HCT116 (cell line): ENCODE measurements at regions of chr11 and their contacts with region 1.

Region 1: GRCh38 chr11:69642913-69643632 is 2.1 kb downstream of the CCND1 start:
- DNase-seq: no peak
- ATAC-seq: peak; percentile 2; the same call in 1 of the 2 replicates
- H3K4me3 ChIP-seq: peak overlapping the region; percentile 96 to 99
- H3K27ac ChIP-seq: peak overlapping the region; percentile 96
- H3K4me1 ChIP-seq: peaks cover 10 to 63% of the 10 kb centered on the region in 2 experiments
- H3K27me3 ChIP-seq: no peaks in the 10 kb centered on the region
- CTCF ChIP-seq: peak in 2 of 3 experiments; percentile 76; a peak in 4 of 6 replicates
- POLR2A ChIP-seq: no peak
- RAD21 ChIP-seq: no peak

Region 2: DNA sequence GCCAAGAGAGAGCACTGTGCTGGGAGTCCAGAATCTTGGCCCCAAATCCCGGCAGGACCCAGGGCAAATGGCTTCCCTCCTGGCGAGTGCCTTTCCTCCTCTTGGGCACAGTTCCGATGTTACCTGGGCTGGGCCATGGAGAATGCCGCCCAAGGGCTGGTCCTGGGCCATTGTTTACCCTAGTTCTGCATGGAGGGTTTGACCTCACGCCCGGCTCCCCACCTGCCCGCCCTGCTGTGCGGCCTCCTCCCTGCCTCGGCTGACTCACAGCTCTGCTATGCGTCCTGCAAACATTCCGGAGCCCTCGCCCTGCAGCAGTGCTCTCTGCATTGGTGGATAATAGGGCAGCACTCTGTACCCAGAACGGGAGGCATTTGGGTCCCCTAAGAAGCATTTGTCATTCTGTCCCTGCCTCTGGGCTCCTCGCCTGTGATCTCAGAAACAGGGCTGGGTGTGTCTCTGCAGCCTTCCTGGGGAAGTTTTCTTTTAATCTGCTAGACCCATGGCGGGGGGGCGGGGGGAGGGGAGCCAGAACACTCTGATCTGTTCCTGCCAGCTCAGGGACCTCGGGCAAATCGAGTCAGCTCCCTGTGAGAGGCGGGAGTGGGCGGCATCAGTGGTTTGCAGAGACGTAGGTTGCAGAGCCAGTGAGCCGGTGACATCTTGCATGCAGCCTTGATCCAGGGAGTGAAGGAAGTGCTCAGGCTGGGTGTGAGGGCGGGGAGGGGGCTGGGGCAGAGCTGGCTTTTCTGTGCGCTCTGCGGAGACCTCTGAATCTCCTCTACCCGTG is 520.2 kb before region 1 on chr11:
- CTCF ChIA-PET with region 1: interaction called, 3 read pairs
- POLR2A ChIA-PET with region 1: no interaction called
- RAD21 ChIA-PET with region 1: no interaction called
- intact Hi-C with region 1: loop called (anchors 2 kb)
- DNase-seq: peak; percentile 92
- ATAC-seq: peak; percentile 88
- H3K4me3 ChIP-seq: peak overlapping the region; percentile 29 to 54
- H3K27ac ChIP-seq: peak overlapping the region; percentile 98
- H3K4me1 ChIP-seq: peaks cover 45 to 69% of the 10 kb centered on the region in 2 experiments
- H3K27me3 ChIP-seq: no peaks in the 10 kb centered on the region
- CTCF ChIP-seq: no peak
- POLR2A ChIP-seq: no peak
- RAD21 ChIP-seq: no peak

Region 3: GRCh38 chr11:69382131-69383128 is 260.6 kb before region 1 on chr11:
- CTCF ChIA-PET with region 1: no interaction called
- POLR2A ChIA-PET with region 1: no interaction called
- RAD21 ChIA-PET with region 1: no interaction called
- intact Hi-C with region 1: loop called (anchors 5 kb)
- DNase-seq: peak; percentile 70
- ATAC-seq: peak; percentile 87
- H3K4me3 ChIP-seq: peak overlapping the region; percentile 61 to 67
- H3K27ac ChIP-seq: peak overlapping the region; percentile 49
- H3K4me1 ChIP-seq: peaks cover 0 to 58% of the 10 kb centered on the region in 2 experiments; a peak in 3 of 4 replicates
- H3K27me3 ChIP-seq: no peaks in the 10 kb centered on the region
- CTCF ChIP-seq: no peak
- POLR2A ChIP-seq: peak; percentile 78
- RAD21 ChIP-seq: no peak

Region 4: GRCh38 chr11:69497221-69497787 is 145.8 kb before region 1 on chr11:
- CTCF ChIA-PET with region 1: interaction called, 4 read pairs
- POLR2A ChIA-PET with region 1: no interaction called
- RAD21 ChIA-PET with region 1: no interaction called
- intact Hi-C with region 1: loop called (anchors 5 kb)
- DNase-seq: peak; percentile 56
- ATAC-seq: peak; percentile 96
- H3K4me3 ChIP-seq: peak overlapping the region in 1 of 2 experiments; percentile 25; a peak in 1 of 4 replicates
- H3K27ac ChIP-seq: no peak overlapping the region
- H3K4me1 ChIP-seq: peaks cover 12 to 27% of the 10 kb centered on the region in 2 experiments
- H3K27me3 ChIP-seq: peaks cover 3% of the 10 kb centered on the region; the same call in 1 of the 2 replicates
- CTCF ChIP-seq: no peak
- POLR2A ChIP-seq: no peak
- RAD21 ChIP-seq: no peak

Region 5: DNA sequence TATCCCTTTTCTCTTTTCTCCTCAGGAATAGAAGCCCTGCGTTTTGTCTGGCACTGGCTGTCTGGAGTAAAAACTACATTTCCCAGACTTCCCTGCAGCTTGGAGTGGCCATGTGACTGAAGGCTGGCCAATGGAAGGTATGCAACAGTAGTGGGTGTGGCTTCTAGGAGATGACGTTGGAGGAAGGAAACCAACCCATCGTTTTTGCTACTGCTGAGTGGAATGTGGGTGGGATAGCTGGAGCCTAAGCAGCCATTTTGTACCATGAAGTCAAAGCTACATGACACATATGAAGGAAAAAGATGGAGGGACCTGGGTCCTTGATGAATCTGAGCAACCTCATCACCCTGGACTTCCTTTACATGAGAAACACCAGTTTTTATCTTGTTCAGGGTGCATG is 156.5 kb after region 1 on chr11:
- CTCF ChIA-PET with region 1: no interaction called
- POLR2A ChIA-PET with region 1: no interaction called
- RAD21 ChIA-PET with region 1: no interaction called
- intact Hi-C with region 1: no loop called
- DNase-seq: peak; percentile 84
- ATAC-seq: peak; percentile 93
- H3K4me3 ChIP-seq: no peak overlapping the region
- H3K27ac ChIP-seq: 0 out of 2 replicates have a peak overlapping the region, but pooled peaks have one; percentile 25
- H3K4me1 ChIP-seq: peaks cover 2 to 22% of the 10 kb centered on the region in 2 experiments; a peak in 3 of 4 replicates
- H3K27me3 ChIP-seq: no peaks in the 10 kb centered on the region
- CTCF ChIP-seq: no peak
- POLR2A ChIP-seq: no peak
- RAD21 ChIP-seq: no peak